MCF 10A (cell line): ENCODE measurements at regions of chr4 and their contacts with region 1.

Region 1: GRCh38 chr4:56435306-56435926 is at the start of gene PPAT:
- DNase-seq: peak; percentile 98
- H3K4me3 Mint-ChIP-seq: peak within 1 kb of the TSS; percentile 95
- H3K27ac Mint-ChIP-seq: peak within 1 kb of the TSS; percentile 91
- H3K4me1 Mint-ChIP-seq: peaks cover 23% of the 10 kb centered on the region
- H3K27me3 Mint-ChIP-seq: no peaks in the 10 kb centered on the region
- CTCF ChIP-seq: no peak
- total RNA-seq, gene PPAT: 35.0 and 47.0 TPM in 2 replicates

Region 2: DNA sequence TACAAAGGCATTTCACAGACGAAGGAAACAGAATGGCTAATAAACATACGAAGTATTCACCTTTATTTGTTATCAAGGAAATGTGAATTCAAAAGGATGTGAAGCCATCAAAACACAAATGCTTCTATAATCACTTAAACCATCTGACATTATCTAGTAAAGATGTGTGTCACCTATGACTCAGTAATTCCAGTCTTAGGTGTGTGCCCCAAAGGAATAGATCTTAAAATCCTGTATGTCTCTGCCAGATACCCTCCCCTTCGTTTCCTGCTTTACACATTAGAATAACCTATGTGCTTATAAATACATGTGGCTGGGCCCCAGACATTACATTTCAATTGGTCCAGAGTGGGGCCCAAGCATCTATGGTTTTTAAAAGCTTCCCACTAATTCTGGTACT is 528.4 kb before region 1 on chr4:
- CTCF ChIA-PET with region 1: no interaction called
- POLR2A ChIA-PET with region 1: no interaction called
- intact Hi-C with region 1: no loop called
- DNase-seq: peak; percentile 53
- H3K4me3 Mint-ChIP-seq: no peak overlapping the region
- H3K27ac Mint-ChIP-seq: no peak overlapping the region
- H3K4me1 Mint-ChIP-seq: peaks cover 9% of the 10 kb centered on the region
- H3K27me3 Mint-ChIP-seq: no peaks in the 10 kb centered on the region
- CTCF ChIP-seq: no peak

Region 3: GRCh38 chr4:56004235-56004634 is 431.2 kb before region 1 on chr4:
- CTCF ChIA-PET with region 1: no interaction called
- POLR2A ChIA-PET with region 1: no interaction called
- intact Hi-C with region 1: no loop called
- DNase-seq: no peak
- H3K4me3 Mint-ChIP-seq: no peak overlapping the region
- H3K27ac Mint-ChIP-seq: no peak overlapping the region
- H3K4me1 Mint-ChIP-seq: no peaks in the 10 kb centered on the region
- H3K27me3 Mint-ChIP-seq: no peaks in the 10 kb centered on the region
- CTCF ChIP-seq: no peak

Region 4: GRCh38 chr4:56387023-56388001 is 48.1 kb before region 1 on chr4 and contains the start of gene AASDH:
- CTCF ChIA-PET with region 1: interaction called, 4 read pairs
- POLR2A ChIA-PET with region 1: interaction called, 125 read pairs
- intact Hi-C with region 1: loop called (anchors 2 kb)
- DNase-seq: peak; percentile 94
- H3K4me3 Mint-ChIP-seq: peak within 1 kb of the TSS; percentile 96
- H3K27ac Mint-ChIP-seq: peak within 1 kb of the TSS; percentile 99
- H3K4me1 Mint-ChIP-seq: peaks cover 29% of the 10 kb centered on the region
- H3K27me3 Mint-ChIP-seq: no peaks in the 10 kb centered on the region
- CTCF ChIP-seq: no peak
- total RNA-seq, gene AASDH: 10.8 and 12.9 TPM in 2 replicates

Region 5: GRCh38 chr4:56424697-56425514 is 10.5 kb before region 1 on chr4:
- CTCF ChIA-PET with region 1: interaction called, 35 read pairs
- POLR2A ChIA-PET with region 1: interaction called, 31 read pairs
- intact Hi-C with region 1: no loop called
- DNase-seq: peak; percentile 53
- H3K4me3 Mint-ChIP-seq: no peak overlapping the region
- H3K27ac Mint-ChIP-seq: no peak overlapping the region
- H3K4me1 Mint-ChIP-seq: peaks cover 13% of the 10 kb centered on the region
- H3K27me3 Mint-ChIP-seq: no peaks in the 10 kb centered on the region
- CTCF ChIP-seq: peak; percentile 48

Region 6: DNA sequence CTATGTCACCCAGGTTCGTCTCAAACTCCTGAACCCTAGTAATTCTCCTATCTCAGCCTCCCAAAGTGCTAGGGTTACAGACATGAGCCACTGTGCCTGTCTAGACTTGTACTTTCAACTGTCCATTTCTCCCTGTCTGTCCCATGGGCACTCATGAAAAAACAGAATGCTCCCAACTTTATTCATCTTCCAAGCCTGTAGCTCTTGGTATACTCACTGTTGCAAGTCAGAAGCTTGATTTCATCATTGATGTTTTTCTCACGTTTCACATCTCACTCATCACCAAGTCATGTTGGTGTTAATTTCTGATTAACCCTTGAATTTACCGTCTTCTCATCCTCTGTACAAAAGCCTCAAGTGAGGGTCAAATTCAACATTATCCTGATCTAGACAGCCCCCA is 24.7 kb after region 1 on chr4:
- CTCF ChIA-PET with region 1: interaction called, 5 read pairs
- POLR2A ChIA-PET with region 1: interaction called, 131 read pairs
- intact Hi-C with region 1: no loop called
- DNase-seq: peak; percentile 38
- H3K4me3 Mint-ChIP-seq: peak overlapping the region; percentile 21
- H3K27ac Mint-ChIP-seq: peak overlapping the region; percentile 72
- H3K4me1 Mint-ChIP-seq: peaks cover 27% of the 10 kb centered on the region
- H3K27me3 Mint-ChIP-seq: no peaks in the 10 kb centered on the region
- CTCF ChIP-seq: no peak

Region 7: DNA sequence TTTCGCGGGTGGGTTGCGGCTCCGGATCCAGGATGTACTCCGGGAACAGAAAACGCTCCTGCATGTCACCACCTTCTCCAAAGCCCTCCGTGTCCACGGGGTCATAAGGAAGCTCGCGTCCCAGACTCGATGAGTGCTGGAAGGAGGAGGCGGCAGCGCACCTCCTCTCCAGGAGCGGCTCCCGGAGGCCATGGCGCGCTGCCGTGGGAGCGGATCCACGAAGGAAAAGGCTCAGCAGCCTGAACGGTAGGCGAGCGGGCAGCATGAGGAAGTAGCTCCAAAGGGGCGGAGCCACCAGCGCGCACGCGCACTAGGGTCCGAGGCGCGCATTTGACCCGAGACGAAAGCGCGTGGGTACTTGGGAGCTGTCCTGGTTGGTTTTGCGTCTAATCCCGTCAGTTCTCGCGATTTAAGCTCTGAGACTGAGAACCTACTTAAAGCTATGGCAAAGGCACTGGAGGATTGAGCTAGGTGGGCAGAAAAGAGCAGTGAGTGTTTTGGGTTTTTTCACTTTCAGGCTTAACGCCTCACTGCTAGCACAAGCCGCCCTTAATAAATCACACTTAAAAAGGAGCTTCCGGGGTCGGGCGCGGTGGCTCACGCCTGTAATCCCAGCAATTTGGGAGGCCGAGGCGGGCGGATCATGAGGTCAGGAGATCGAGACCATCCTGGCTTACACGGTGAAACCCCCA is 542.1 kb after region 1 on chr4 and contains the start of gene NOA1:
- CTCF ChIA-PET with region 1: interaction called, 3 read pairs
- POLR2A ChIA-PET with region 1: interaction called, 58 read pairs
- intact Hi-C with region 1: no loop called
- DNase-seq: peak; percentile 99
- H3K4me3 Mint-ChIP-seq: peak within 1 kb of the TSS; percentile 97
- H3K27ac Mint-ChIP-seq: peak within 1 kb of the TSS; percentile 97
- H3K4me1 Mint-ChIP-seq: peaks cover 16% of the 10 kb centered on the region
- H3K27me3 Mint-ChIP-seq: no peaks in the 10 kb centered on the region
- CTCF ChIP-seq: no peak
- total RNA-seq, gene NOA1: 17.1 and 23.2 TPM in 2 replicates